ENCODE measurements at regions of chr1 and their contacts with region 1.

Region 1: GRCh38 chr1:180863158-180863775 is 49.4 kb upstream of the KIAA1614 start:
- DNase-seq: peak in 1 of 5 donors; percentile 39
- H3K4me3 ChIP-seq: no peak overlapping the region
- H3K27ac ChIP-seq: no peak overlapping the region
- H3K4me1 ChIP-seq: no peaks in the 10 kb centered on the region
- H3K27me3 ChIP-seq: no peaks in the 10 kb centered on the region
- CTCF ChIP-seq: peak; percentile 26 to 75 (median 69)
- EP300 ChIP-seq: no peak
- POLR2A ChIP-seq: no peak

Region 2: DNA sequence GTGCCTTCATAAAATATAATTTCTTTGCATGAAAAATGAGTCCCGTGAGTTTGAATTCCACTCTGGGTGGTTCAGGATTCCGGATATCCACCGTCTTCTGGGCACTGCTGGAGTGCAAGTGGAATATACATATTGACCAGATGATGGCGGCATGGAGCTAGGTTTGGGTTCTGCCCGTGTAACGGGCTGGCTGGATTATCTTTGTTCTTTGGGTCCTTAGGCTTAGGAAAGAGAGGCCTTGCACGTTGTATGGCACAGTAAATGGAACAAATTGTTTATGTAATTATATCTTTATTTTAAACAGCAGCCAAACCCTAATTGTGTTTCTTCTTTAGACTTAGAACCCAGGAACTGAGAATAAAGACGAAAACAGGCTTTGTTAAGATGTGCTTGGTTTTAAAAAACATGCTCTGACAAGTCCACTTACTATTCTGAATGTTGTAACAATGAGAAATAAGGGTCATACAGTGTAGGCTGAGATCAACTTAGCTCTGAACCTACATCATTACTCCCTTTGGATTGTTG is 347.3 kb before region 1 on chr1:
- intact Hi-C with region 1: loop called in 1 of 4 experiments (anchors 5 kb)
- DNase-seq: peak; percentile 55 to 74 (median 57)
- H3K4me3 ChIP-seq: no peak overlapping the region
- H3K27ac ChIP-seq: no peak overlapping the region
- H3K4me1 ChIP-seq: no peaks in the 10 kb centered on the region
- H3K27me3 ChIP-seq: no peaks in the 10 kb centered on the region
- CTCF ChIP-seq: peak; percentile 64 to 80 (median 73)
- EP300 ChIP-seq: no peak
- POLR2A ChIP-seq: no peak

Region 3: GRCh38 chr1:180533266-180533987 is 329.8 kb before region 1 on chr1:
- intact Hi-C with region 1: loop called (anchors 5 to 10 kb)
- DNase-seq: peak; percentile 34 to 69 (median 61)
- H3K4me3 ChIP-seq: no peak overlapping the region
- H3K27ac ChIP-seq: no peak overlapping the region
- H3K4me1 ChIP-seq: no peaks in the 10 kb centered on the region
- H3K27me3 ChIP-seq: no peaks in the 10 kb centered on the region
- CTCF ChIP-seq: peak; percentile 45 to 48 (median 47)
- EP300 ChIP-seq: no peak
- POLR2A ChIP-seq: no peak